ENCODE measurements at regions of chr4 and their contacts with region 1.

Region 1: GRCh38 chr4:169437299-169438047 is 166.7 kb upstream of the SH3RF1 start:
- DNase-seq: no peak
- H3K4me3 ChIP-seq: no peak overlapping the region
- H3K27ac ChIP-seq: no peak overlapping the region
- H3K4me1 ChIP-seq: no peaks in the 10 kb centered on the region
- H3K27me3 ChIP-seq: no peaks in the 10 kb centered on the region
- CTCF ChIP-seq: no peak

Region 2: GRCh38 chr4:168765726-168766125 is 671.7 kb before region 1 on chr4:
- CTCF ChIA-PET with region 1: no interaction called
- POLR2A ChIA-PET with region 1: no interaction called
- intact Hi-C with region 1: no loop called
- DNase-seq: peak in 1 of 2 experiments; percentile 73
- H3K4me3 ChIP-seq: no peak overlapping the region
- H3K27ac ChIP-seq: no peak overlapping the region
- H3K4me1 ChIP-seq: no peaks in the 10 kb centered on the region
- H3K27me3 ChIP-seq: no peaks in the 10 kb centered on the region
- CTCF ChIP-seq: no peak

Region 3: DNA sequence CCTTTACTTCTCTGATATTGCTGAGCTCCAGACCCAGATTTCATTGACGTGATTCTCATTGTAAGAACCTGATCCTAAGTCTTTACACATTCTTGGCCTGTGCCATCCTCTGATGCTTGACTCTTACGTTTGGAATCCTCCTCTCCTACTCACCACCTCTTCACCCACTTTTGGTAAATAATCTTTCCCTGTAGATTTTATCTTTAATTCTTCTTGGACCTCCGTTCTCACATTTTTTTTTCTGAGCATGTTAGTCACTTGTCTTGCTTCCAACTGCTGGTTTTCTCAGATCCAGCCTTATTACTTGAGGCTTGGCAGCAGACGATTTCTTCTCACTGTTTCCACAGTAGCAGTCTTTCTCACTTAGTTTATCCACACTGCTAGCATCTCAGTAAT is 154.4 kb before region 1 on chr4:
- CTCF ChIA-PET with region 1: interaction called, 11 read pairs
- POLR2A ChIA-PET with region 1: no interaction called
- intact Hi-C with region 1: no loop called
- DNase-seq: peak; percentile 31 to 84
- H3K4me3 ChIP-seq: peak overlapping the region; percentile 46; the same call in 1 of the 2 replicates
- H3K27ac ChIP-seq: peak overlapping the region; percentile 83
- H3K4me1 ChIP-seq: peaks cover 26% of the 10 kb centered on the region
- H3K27me3 ChIP-seq: no peaks in the 10 kb centered on the region
- CTCF ChIP-seq: no peak

Measured in PC-9 (cell line).